Activated T-helper 1 cell treated with anti-CD3 and anti-CD28 coated beads, Interleukin-12 subunit alpha, Interleukin-12 subunit beta, Interleukin-2, Interleukin-4 antibody, amounts not matched to agents 30 ng/mL and 10 ng/mL and 1 ng/mL, durations not matched to agents 14 hours and 24 hours and 36 hours (primary cell): ENCODE measurements at regions of chr1 and their contacts with region 1.

Region 1: DNA sequence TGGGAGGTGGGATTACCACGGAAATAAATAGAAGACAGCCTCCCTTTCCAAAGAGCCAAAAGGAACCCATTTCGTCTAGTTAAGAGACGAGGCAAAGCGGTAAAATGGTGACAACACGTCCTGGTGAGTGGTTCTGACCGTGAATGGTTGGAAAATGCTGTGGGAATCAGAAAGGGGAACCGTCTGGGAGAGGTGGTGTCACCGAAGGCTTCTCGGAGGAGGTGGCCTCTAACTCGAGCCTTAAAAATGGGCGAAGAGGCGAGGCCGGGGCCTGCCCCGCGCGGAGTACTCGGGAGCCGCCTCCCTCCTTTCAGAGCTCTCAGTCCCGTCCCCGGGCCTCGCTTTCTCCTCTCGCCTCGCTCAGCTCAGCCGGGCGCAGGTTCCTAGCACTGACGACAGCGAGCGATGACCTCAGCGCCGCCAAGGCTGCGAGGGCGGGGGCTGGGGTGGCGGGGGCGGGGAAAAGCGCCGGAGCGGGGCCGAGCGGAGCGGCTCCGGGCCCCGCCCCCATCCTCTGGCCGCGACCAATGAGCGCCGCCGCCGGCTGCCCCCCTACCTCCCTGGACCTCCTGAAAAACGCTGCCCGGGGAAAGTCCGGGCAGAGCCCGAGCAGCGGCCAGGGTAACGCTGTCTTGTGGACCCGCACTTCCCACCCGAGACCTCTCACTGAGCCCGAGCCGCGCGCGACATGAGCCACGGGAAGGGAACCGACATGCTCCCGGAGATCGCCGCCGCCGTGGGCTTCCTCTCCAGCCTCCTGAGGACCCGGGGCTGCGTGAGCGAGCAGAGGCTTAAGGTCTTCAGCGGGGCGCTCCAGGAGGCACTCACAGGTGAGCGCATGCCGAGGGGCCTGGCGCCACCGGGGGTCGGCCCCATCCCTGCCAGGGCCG is at the start of gene BTG2:
- DNase-seq: peak; percentile 89
- H3K4me3 Mint-ChIP-seq: peak within 1 kb of the TSS; percentile 92
- H3K27ac Mint-ChIP-seq: peak within 1 kb of the TSS; percentile 93
- H3K4me1 Mint-ChIP-seq: peaks cover 61% of the 10 kb centered on the region
- H3K27me3 Mint-ChIP-seq: no peaks in the 10 kb centered on the region
- total RNA-seq, gene BTG2: 137 and 139 TPM in 2 replicates

Region 2: DNA sequence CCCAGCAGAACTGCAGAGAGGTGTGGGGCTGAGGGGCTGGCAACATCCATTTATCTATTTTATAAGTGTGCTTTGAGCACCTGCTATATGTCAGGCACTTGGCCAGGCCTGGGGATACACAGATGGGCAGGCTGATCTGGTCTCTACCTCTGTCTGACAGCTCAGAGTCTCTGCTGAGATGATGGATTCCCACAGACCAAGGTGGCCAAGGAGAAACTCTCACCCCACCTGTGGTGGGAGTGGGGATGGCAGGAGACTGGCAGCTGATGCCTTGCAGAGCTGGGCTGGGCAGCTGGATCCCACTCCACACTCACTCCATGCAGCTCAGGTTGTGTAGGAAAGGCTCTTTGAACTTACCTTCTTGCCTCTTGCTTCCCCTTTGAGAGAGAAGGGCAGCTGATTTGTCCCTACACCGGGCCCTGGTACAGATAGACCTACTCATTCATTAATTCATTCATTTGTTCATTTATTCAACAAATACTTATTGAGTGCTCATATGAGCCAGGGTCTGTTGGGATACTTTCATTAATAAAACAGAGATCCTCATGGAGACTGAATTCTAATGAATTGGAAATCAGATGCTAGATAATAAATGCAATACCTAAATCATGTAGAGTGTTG is 168.6 kb before region 1 on chr1:
- intact Hi-C with region 1: no loop called
- DNase-seq: no peak
- H3K4me3 Mint-ChIP-seq: no peak overlapping the region
- H3K27ac Mint-ChIP-seq: no peak overlapping the region
- H3K4me1 Mint-ChIP-seq: peaks cover 6% of the 10 kb centered on the region
- H3K27me3 Mint-ChIP-seq: peaks cover 6% of the 10 kb centered on the region

Region 3: DNA sequence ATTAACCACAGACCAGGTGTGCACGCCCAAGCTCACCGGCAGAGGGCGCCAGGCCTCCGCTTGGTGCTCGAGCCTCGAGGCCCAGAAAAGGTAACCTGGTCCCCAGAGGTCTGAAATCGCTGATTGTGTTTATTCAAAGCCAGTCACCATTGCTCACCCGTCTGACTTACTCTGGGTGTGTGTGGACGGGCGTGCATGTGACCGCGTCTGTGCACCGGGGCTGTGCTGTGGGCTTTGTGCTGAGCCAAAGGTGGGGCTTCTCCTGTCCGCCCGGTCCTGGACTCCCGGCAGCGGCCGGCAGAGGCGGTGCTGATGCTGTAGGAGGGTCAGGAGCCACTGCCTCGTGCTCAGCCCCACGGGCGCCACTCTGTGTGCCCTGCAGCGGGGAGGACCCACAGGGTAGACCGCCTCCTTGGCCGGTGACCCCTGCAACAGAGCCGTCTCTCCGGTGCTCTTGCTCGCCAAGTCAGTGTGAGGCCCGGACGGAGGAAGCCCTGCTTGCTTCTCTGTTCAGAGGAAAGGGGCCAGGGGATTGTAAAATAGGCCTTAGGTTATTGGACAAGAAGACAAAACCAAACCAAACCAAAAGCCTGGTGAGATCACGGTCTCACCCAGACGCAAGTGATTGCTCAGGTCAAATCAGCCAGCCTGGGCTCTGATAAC is 31.8 kb before region 1 on chr1:
- intact Hi-C with region 1: loop called (anchors 1 kb)
- DNase-seq: peak; percentile 85
- H3K4me3 Mint-ChIP-seq: peak overlapping the region; percentile 72
- H3K27ac Mint-ChIP-seq: peak overlapping the region; percentile 79
- H3K4me1 Mint-ChIP-seq: peaks cover 58% of the 10 kb centered on the region
- H3K27me3 Mint-ChIP-seq: no peaks in the 10 kb centered on the region

Region 4: GRCh38 chr1:203320591-203321272 is 15.6 kb after region 1 on chr1:
- intact Hi-C with region 1: loop called (anchors 1 kb)
- DNase-seq: peak; percentile 67
- H3K4me3 Mint-ChIP-seq: peak overlapping the region; percentile 55
- H3K27ac Mint-ChIP-seq: peak overlapping the region; percentile 59
- H3K4me1 Mint-ChIP-seq: peaks cover 90% of the 10 kb centered on the region
- H3K27me3 Mint-ChIP-seq: peaks cover 2% of the 10 kb centered on the region